Cardiac septum (tissue), 1 donor: ENCODE measurements at regions of chr2 and their contacts with region 1.

Region 1: GRCh38 chr2:197499594-197500526 is at the starts of genes HSPD1 and HSPE1:
- DNase-seq: peak; percentile 98
- total RNA-seq, gene HSPD1: 144 TPM
- total RNA-seq, gene HSPE1: 88.3 TPM

Region 2: DNA sequence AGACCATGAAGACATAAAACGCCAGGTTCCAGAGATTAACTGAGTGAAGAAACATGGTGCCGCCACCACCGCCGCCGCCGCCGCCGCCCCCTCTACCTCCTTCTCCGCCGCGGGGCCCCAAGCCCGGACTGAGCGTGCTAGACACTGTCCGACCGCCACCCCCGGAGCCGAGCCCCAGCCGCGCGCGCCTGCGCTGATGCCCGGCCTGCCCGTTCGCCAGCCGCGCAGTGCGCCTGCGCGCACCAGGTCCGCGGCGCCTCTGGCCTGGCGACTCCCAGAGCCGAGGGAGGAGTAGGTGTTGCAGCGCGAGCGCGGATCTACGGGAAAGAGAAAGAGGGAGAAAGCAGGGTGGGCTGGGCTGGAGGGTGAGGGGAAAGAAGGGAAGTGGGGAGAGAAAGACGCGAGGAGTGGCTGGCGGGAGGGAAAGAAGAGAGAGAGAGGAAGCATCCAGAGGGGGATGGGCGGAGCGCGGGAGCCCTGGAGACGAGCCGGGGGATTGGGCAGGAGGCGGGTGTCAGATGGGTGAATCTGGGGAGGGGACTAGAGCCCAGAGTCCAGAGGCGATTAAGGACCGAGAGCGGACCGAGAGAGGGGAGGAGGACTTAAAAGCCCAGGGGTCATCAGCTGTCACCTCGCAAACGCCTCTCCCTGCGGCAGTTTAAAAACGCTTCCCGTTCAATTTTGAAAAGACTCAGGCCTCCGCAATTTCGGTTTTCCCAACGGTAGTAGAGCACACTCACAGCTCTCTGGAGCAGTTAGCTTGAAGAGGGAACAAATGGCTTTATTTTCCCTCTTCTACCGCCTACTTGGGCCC is 573.1 kb before region 1 on chr2 and contains the start of gene PGAP1:
- intact Hi-C with region 1: loop called (anchors 10 kb)
- DNase-seq: peak; percentile 96
- total RNA-seq, gene PGAP1: 7.7 TPM

Region 3: GRCh38 chr2:197434541-197435513 is 65.0 kb before region 1 on chr2 and contains the start of gene SF3B1:
- intact Hi-C with region 1: loop called (anchors 1 kb)
- DNase-seq: peak; percentile 99
- total RNA-seq, gene SF3B1: 144 TPM

Region 4: GRCh38 chr2:197453161-197453914 is 46.5 kb before region 1 on chr2 and contains the start of gene COQ10B:
- intact Hi-C with region 1: loop called (anchors 5 kb)
- DNase-seq: peak; percentile 100
- total RNA-seq, gene COQ10B: 38.5 TPM

Region 5: DNA sequence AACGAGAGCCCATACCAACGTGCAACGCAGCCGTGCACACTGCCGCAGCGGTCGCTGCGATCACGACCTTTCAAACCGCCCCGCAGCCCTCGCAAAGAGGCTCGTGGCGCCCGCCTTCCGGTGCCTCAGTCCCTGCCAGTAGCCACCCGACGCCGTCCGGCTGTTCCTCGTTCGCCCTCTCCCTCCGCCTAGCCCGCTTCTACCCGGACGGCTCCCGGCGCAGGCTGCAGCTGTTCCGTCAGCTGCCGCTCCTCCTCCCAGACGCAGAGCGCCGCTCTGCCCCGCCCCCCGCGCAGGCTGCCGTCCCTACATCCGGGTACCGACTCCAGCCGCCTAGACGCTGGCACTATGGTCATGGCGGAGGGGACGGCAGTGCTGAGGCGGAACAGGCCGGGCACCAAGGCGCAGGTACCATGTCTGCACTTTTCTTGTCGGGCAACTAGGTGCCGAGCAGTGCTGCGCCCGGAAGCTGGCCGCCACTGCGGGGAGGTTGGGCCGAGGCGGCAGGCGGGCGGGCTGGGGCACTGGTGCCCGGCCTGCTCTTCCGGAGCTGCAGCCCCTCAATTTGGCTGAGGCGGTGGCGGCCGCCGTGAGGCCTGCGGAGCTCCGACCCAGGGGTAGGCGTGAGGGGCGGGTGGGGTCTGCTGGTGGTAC is 16.0 kb after region 1 on chr2 and contains the start of gene MOB4:
- intact Hi-C with region 1: loop called (anchors 1 kb)
- DNase-seq: peak; percentile 98
- total RNA-seq, gene MOB4: 27.3 TPM

Region 6: GRCh38 chr2:197777823-197778407 is 278.1 kb after region 1 on chr2:
- intact Hi-C with region 1: loop called (anchors 10 kb)
- DNase-seq: no peak